ENCODE measurements at regions of chr15 and their contacts with region 1.

Region 1: DNA sequence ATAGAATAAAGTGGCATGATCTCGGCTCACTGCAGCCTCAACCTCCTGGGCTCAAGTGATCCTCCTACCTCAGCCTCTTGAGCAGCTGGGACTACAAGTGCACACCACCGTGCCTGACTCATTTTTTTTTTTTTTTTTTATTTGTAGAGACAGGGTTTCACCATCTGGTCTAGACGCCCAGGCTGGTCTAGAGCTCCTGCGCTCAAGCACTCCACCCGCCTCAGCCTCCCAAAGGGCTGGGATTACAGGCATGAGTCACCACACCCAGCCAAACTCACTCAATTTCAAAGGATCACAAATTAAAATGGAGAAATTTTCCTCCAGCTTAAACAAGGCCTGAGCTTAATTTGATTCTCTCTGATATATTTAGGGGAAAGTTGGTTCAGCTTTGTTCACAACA is 27.3 kb upstream of the NMB start:
- DNase-seq: peak; percentile 26 to 88
- H3K4me3 ChIP-seq: no peak overlapping the region
- CTCF ChIP-seq: no peak
- POLR2A ChIP-seq: no peak

Region 2: DNA sequence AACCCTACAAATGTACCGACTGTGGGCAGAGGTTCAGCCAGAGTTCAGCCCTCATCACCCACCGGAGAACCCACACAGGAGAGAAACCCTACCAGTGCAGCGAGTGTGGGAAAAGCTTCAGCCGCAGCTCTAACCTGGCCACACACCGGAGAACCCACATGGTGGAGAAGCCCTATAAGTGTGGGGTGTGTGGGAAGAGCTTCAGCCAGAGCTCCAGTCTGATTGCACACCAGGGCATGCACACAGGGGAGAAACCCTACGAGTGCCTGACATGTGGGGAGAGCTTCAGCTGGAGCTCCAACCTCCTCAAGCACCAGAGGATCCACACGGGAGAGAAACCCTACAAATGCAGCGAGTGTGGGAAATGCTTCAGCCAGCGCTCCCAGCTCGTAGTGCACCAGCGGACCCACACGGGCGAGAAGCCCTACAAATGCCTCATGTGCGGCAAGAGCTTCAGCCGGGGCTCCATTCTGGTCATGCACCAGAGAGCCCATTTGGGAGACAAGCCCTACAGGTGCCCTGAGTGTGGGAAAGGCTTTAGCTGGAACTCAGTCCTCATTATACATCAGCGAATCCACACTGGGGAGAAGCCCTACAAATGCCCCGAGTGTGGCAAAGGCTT is 63.8 kb before region 1 on chr15:
- intact Hi-C with region 1: loop called (anchors 2 kb)
- DNase-seq: no peak
- H3K4me3 ChIP-seq: no peak overlapping the region
- CTCF ChIP-seq: no peak
- POLR2A ChIP-seq: no peak